Upper lobe of right lung (tissue), 1 donor: ENCODE measurements at regions of chr20 and their contacts with region 1.

Region 1: GRCh38 chr20:45044084-45044573 is 56.8 kb downstream of the KCNS1 start:
- DNase-seq: no peak
- ATAC-seq: peak; percentile 92
- H3K4me3 ChIP-seq: no peak overlapping the region
- H3K27ac ChIP-seq: no peak overlapping the region
- H3K4me1 ChIP-seq: peaks cover 10% of the 10 kb centered on the region
- H3K27me3 ChIP-seq: no peaks in the 10 kb centered on the region
- CTCF ChIP-seq: peak; percentile 86

Region 2: DNA sequence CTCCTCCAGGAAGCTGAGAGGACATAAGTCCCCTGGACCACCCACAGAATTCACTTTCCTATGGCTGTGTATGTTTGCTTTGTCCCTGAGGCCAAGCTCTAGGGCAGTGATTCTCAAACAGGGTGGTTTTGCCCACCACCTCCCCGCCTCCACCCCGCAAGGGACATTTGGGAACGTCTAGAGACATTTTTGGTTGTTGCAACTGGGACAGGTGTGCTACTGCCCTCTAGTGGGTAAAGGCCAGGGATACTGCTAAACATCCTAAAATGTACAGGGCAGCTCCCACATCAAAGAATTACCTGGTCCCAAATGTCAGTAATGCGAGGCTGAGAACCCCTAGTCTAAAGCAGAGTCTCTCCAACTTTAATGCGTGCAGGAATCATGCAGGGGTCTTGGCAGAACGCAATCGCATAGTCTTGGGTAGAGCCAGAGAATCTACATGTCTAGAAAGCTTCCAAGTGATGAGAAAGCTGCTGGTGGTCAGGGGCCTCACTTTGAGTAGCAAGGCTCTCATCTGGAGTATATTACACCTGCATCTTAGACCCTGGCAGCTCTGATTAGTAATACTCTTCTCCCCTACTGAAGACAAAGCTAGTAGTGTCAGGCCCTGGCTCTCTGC is 51.7 kb after region 1 on chr20:
- intact Hi-C with region 1: loop called (anchors 10 kb)
- DNase-seq: no peak
- ATAC-seq: peak; percentile 78
- H3K4me3 ChIP-seq: no peak overlapping the region
- H3K27ac ChIP-seq: no peak overlapping the region
- H3K4me1 ChIP-seq: peaks cover 12% of the 10 kb centered on the region
- H3K27me3 ChIP-seq: peaks cover 44% of the 10 kb centered on the region
- CTCF ChIP-seq: peak; percentile 78